Endothelial cell of umbilical vein (primary cell): ENCODE measurements at regions of chr9 and their contacts with region 1.

Region 1: DNA sequence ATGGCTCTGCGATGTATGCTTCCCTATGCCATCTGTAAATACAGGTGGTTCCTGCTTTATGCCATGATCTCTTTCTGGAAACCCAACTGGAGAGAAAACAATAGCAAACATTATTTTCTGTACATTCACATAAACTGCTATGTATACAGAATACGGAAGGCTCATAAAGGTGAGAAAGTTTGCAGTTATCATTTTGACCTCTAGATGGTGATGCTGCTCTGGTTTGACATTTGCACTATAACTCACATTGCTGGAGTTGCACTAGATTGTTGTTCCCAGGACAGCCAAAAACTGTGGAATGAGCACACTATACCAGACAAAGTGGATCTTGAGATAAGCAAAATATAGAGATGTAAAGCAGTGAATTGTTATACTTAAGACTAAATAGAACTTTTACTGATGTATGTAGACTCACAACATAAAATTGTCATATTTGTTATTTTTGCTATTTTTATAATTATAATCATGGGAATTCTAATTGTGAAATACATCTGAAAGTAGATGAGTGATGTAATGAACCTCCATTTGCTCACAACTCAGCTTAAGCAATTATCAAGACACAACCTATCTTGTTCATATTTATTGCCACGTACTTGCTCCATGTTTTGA is 246.5 kb downstream of the PTPRD start:
- DNase-seq: peak; percentile 57
- H3K4me3 ChIP-seq: no peak overlapping the region
- H3K27ac ChIP-seq: no peak overlapping the region
- H3K4me1 ChIP-seq: no peaks in the 10 kb centered on the region
- H3K27me3 ChIP-seq: no peaks in the 10 kb centered on the region
- CTCF ChIP-seq: peak; percentile 55 to 60
- POLR2A ChIP-seq: no peak

Region 2: DNA sequence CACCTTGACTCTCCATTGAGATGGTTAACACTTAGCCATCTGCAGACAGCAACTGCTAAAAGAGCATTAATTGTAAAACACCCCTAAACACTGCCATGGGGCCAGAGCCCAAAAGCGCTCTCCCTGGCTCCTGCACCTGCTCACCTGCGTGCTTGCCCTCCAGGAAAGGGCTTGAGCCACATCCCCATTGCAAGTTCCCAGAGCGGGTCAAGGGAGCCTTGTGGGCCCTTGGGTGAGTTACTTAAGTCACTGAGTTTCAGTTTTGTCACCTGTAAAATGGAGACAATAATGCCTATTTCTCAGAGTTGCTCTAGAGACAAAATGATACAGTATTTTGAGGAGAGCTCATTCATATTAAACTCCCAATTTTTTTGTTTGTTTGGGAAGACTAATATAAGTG is 721.3 kb before region 1 on chr9:
- CTCF ChIA-PET with region 1: no interaction called
- POLR2A ChIA-PET with region 1: no interaction called
- dilution Hi-C with region 1: no loop called
- intact Hi-C with region 1: no loop called
- DNase-seq: no peak
- H3K4me3 ChIP-seq: no peak overlapping the region
- H3K27ac ChIP-seq: no peak overlapping the region
- H3K4me1 ChIP-seq: peaks cover 16% of the 10 kb centered on the region
- H3K27me3 ChIP-seq: no peaks in the 10 kb centered on the region
- CTCF ChIP-seq: no peak
- POLR2A ChIP-seq: no peak

Region 3: DNA sequence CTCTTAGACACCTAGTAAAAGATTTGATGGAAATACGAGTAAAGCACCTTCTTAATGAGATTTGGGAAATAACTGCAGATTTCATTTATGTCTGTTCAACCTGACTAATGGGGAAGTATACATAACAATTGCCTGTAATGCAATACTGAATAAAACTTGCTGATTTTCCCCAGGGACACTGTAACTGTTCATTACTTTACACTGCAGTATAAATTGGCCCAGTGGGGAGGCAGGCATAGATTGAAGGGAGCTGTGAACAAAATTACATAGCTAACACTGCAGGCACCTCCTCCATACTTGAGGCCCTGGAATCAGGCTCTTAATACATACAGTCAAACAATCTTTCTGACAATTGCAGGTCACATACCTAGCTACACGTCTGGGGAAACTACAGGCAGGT is 30.3 kb after region 1 on chr9:
- CTCF ChIA-PET with region 1: no interaction called
- POLR2A ChIA-PET with region 1: no interaction called
- dilution Hi-C with region 1: no loop called
- intact Hi-C with region 1: no loop called
- DNase-seq: no peak
- H3K4me3 ChIP-seq: no peak overlapping the region
- H3K27ac ChIP-seq: no peak overlapping the region
- H3K4me1 ChIP-seq: no peaks in the 10 kb centered on the region
- H3K27me3 ChIP-seq: no peaks in the 10 kb centered on the region
- CTCF ChIP-seq: no peak
- POLR2A ChIP-seq: no peak

Region 4: DNA sequence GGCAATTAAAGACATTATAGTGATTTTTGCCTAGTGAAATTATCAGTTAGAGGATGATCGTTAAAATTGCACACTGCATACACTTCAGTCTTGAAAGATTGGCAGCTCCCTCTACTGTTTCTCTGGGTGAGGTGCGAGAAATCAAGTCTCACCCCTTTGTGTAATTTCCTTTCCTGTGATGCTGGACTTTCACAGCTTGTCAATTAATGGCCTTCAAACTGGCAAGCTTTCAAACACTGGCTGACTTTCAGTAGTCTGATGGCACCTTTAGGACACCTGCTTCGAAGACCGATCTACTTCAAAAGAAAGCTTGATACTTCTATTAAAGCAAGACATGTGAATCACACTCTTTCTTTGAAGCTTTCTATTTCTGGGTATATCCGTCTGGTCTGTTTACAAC is 953.3 kb after region 1 on chr9:
- CTCF ChIA-PET with region 1: no interaction called
- POLR2A ChIA-PET with region 1: no interaction called
- dilution Hi-C with region 1: no loop called
- intact Hi-C with region 1: loop called (anchors 2 kb)
- DNase-seq: peak; percentile 6
- H3K4me3 ChIP-seq: no peak overlapping the region
- H3K27ac ChIP-seq: no peak overlapping the region
- H3K4me1 ChIP-seq: no peaks in the 10 kb centered on the region
- H3K27me3 ChIP-seq: no peaks in the 10 kb centered on the region
- CTCF ChIP-seq: peak; percentile 21 to 25
- POLR2A ChIP-seq: no peak